Ascending aorta (tissue), 2 donors: ENCODE measurements at regions of chr6 and their contacts with region 1.

Region 1: GRCh38 chr6:139375232-139376016 is 976 bp upstream of the CITED2 start:
- DNase-seq: peak; percentile 46 to 91
- H3K4me3 ChIP-seq: peak overlapping the region; percentile 69 to 75
- H3K27ac ChIP-seq: peak overlapping the region; percentile 92 to 93
- H3K4me1 ChIP-seq: peaks cover 0 to 13% of the 10 kb centered on the region in 2 donors
- H3K27me3 ChIP-seq: no peaks in the 10 kb centered on the region
- CTCF ChIP-seq: peak in 1 of 3 experiments; percentile 20

Region 2: DNA sequence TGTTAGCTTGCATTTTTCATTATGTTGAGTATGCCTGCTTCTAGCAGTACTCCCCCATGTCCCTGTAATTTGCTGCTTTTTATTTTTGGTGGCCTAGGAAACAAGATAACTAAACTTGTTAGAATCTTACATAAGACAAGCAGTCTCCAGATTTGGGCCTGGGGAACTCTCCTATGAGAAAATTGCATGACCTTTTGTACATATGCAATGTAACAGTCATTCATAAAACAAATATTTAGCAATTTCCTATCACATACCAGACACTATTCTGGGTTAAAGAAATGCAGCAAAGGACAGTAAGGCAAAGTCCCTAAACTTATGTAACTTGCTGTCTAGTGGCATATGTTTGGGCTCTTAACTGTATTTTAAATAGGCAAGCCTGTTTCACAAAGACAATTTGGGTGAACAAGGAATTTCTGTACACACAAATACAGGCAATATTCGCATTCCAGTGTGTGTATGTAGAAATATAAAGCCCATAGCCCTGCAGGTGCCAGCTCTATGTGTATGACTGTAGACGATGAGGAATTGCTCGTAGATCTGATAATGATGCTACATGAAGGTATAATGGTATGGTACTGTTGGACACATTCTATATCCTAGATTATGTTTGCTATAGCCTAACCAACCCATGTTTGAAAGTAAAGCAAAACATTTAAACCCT is 304.2 kb after region 1 on chr6:
- intact Hi-C with region 1: loop called (anchors 5 kb)
- DNase-seq: no peak
- H3K4me3 ChIP-seq: no peak overlapping the region
- H3K27ac ChIP-seq: no peak overlapping the region
- H3K4me1 ChIP-seq: no peaks in the 10 kb centered on the region
- H3K27me3 ChIP-seq: no peaks in the 10 kb centered on the region
- CTCF ChIP-seq: no peak

Region 3: GRCh38 chr6:139881728-139882211 is 506.3 kb after region 1 on chr6:
- intact Hi-C with region 1: loop called (anchors 5 kb)
- DNase-seq: no peak
- H3K4me3 ChIP-seq: peak overlapping the region; percentile 1 to 32
- H3K27ac ChIP-seq: peak overlapping the region in 1 of 2 donors; percentile 69
- H3K4me1 ChIP-seq: peaks cover 4 to 16% of the 10 kb centered on the region in 2 donors
- H3K27me3 ChIP-seq: no peaks in the 10 kb centered on the region
- CTCF ChIP-seq: peak; percentile 43 to 54 (median 45)

Region 4: DNA sequence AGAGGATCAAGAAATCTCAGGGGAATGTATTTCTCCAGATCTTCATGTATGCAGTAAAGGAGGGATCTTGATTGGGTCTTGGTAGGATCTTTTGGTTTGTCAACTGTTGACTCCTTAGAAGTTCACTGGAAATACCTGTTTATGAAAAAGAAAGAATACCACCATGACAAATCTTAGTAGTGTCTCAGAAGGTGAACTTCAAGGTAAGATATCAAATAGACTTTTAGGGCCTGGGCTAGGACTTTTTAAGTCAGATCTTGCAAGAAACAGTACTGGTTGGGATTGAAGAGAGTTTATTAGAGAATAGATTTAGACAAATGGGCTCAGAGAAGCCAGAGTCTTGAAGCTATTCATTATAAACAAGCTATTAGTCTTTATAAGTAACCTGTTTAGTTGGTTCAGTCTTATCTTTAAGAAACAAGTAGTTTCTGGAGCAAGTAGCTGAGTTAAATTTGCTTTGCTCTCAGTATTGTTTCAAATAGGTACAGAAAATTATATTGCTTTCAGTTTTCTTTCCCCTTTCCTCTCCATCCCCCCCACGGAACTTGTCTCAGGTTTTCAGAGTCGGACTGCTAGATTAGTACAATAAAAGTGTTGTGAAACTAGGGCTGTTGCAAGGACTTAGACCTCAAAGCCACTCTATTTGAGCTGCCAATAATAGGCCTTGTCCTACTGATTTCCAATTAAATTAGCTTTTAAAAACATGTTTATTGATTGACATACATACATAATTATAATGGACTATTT is 528.2 kb after region 1 on chr6:
- intact Hi-C with region 1: no loop called
- DNase-seq: no peak
- H3K4me3 ChIP-seq: no peak overlapping the region
- H3K27ac ChIP-seq: no peak overlapping the region
- H3K4me1 ChIP-seq: no peaks in the 10 kb centered on the region
- H3K27me3 ChIP-seq: no peaks in the 10 kb centered on the region
- CTCF ChIP-seq: no peak

Region 5: DNA sequence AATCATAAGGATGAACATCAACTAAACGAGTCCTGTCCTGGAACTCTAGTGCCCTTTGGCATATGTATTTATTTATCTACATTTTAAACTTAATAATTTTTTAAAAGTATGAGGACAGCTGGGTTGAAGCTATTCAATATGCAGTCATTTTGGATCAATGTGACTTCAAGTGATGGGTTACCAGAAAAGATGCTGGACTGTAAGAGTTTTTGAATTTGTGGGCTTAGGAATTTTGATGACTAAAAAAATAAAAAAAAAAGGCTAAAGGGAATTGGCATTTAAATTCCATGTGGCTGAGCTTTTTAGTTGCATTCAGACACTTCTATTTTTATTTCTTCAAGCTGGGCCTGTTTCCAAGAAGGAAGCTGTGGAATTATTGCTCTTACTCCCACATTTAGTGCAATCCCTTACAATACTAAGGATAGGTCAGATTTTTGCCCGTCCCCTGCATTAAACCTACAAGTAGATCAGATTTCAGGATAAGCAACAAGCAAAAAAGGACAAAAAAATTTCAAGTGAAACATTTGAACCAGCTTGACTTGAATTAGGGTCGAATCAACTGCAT is 703.2 kb after region 1 on chr6:
- intact Hi-C with region 1: loop called (anchors 2 kb)
- DNase-seq: no peak
- H3K4me3 ChIP-seq: peak overlapping the region; percentile 3 to 17
- H3K27ac ChIP-seq: peak overlapping the region; percentile 73 to 77
- H3K4me1 ChIP-seq: peaks cover 0 to 20% of the 10 kb centered on the region in 2 donors
- H3K27me3 ChIP-seq: no peaks in the 10 kb centered on the region
- CTCF ChIP-seq: no peak

Region 6: GRCh38 chr6:140572129-140572528 is 1196.7 kb after region 1 on chr6:
- intact Hi-C with region 1: loop called (anchors 10 kb)
- DNase-seq: no peak
- H3K4me3 ChIP-seq: no peak overlapping the region
- H3K27ac ChIP-seq: peak overlapping the region; percentile 67 to 68
- H3K4me1 ChIP-seq: peaks cover 4 to 15% of the 10 kb centered on the region in 2 donors
- H3K27me3 ChIP-seq: no peaks in the 10 kb centered on the region
- CTCF ChIP-seq: no peak